Breast epithelium (tissue), 4 donors: ENCODE measurements at regions of chr12 and their contacts with region 1.

Region 1: GRCh38 chr12:90102957-90103652 is 394.5 kb upstream of the ATP2B1 start:
- DNase-seq: no peak
- H3K4me3 ChIP-seq: no peak overlapping the region
- H3K27ac ChIP-seq: no peak overlapping the region
- H3K4me1 ChIP-seq: no peaks in the 10 kb centered on the region
- H3K27me3 ChIP-seq: no peaks in the 10 kb centered on the region
- CTCF ChIP-seq: peak in 1 of 3 donors; percentile 30
- POLR2A ChIP-seq: no peak

Region 2: DNA sequence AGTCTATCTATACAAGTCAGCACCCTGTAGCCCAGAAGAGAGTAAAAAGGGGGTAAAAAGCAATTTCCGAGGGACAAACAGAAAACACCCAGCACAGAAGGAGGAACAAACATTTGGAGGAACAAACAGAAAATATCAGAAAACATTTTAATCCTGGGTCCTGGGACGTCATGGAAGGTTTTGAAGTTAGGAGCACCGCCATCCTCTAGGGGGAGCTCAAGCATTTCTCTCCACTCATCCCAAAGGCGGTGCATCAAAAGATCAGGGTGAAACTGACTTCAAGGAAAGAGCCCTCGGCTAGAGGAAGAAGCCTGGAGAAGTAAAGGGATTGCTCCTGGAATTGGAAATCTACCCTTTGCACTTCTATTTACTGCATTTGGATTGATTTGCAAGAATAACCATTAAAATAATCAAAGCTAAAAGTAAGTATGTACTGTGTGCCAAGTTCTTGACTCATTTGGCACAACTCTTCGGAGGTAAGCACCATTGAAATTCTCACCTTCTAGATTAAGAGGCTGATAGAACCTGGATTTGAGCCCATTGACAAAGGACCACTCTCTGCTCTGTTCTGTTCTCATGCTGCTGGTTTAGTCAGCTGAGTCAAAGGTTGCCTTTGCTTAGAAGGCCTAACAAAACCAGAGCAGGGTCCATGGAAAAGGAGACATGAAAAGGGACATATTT is 560.1 kb before region 1 on chr12:
- intact Hi-C with region 1: loop called (anchors 10 kb)
- DNase-seq: peak in 1 of 2 donors; percentile 59
- H3K4me3 ChIP-seq: no peak overlapping the region
- H3K27ac ChIP-seq: no peak overlapping the region
- H3K4me1 ChIP-seq: no peaks in the 10 kb centered on the region
- H3K27me3 ChIP-seq: no peaks in the 10 kb centered on the region
- CTCF ChIP-seq: peak; percentile 36 to 90 (median 81)
- POLR2A ChIP-seq: no peak

Region 3: DNA sequence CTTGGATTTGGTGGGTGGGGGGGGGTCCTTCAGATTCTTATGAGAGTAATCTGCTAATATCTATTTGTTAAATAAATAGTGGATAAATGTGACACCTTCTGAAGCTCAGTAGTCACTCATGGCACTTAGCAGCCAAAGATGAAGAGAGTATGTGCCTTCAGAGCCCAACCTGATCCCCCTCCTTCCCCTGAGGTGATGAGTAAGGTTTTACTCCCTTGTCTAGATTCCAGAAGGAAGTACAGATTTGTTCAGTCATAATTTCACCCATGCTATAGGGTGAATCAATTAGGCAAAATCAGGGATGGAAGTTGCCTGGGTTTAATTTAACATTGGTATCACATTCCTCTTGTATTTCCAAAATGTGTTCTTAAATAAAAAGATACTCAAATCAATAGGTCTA is 54.2 kb before region 1 on chr12:
- intact Hi-C with region 1: no loop called
- DNase-seq: no peak
- H3K4me3 ChIP-seq: no peak overlapping the region
- H3K27ac ChIP-seq: no peak overlapping the region
- H3K4me1 ChIP-seq: no peaks in the 10 kb centered on the region
- H3K27me3 ChIP-seq: no peaks in the 10 kb centered on the region
- CTCF ChIP-seq: no peak
- POLR2A ChIP-seq: no peak

Region 4: DNA sequence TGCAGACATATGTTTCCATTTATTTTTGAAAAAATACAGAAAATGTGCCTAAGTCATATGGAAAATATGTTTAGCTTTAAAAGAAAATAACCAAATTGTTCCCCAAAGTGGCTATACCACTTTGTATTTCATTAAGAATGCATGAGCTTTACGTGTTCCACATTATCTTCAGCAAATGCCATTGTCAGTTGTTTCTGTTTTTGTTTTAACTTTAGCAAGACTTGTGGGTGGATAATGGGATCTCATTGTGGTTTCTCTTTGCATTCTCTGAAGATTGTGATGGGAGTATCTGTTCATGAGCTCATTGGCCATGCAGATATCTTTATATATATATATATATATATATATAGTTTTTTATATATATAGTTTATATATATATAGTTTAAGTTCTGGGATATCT is 670.4 kb after region 1 on chr12:
- intact Hi-C with region 1: no loop called
- DNase-seq: no peak
- H3K4me3 ChIP-seq: no peak overlapping the region
- H3K27ac ChIP-seq: no peak overlapping the region
- H3K4me1 ChIP-seq: no peaks in the 10 kb centered on the region
- H3K27me3 ChIP-seq: no peaks in the 10 kb centered on the region
- CTCF ChIP-seq: no peak
- POLR2A ChIP-seq: no peak